Activated B cell treated with CpG ODN at 0.5 μM for 24 hours (primary cell): ENCODE measurements at regions of chr2 and their contacts with region 1.

Region 1: GRCh38 chr2:219160186-219161017 is at the start of gene NHEJ1:
- DNase-seq: peak; percentile 96
- ATAC-seq: peak; percentile 87
- H3K4me3 Mint-ChIP-seq: peak within 1 kb of the TSS; percentile 96
- H3K27ac Mint-ChIP-seq: peak within 1 kb of the TSS; percentile 98
- H3K4me1 Mint-ChIP-seq: peaks cover 16% of the 10 kb centered on the region
- H3K27me3 Mint-ChIP-seq: no peaks in the 10 kb centered on the region
- CTCF ChIP-seq: peak; percentile 42
- total RNA-seq, gene NHEJ1: 19.1 and 25.0 TPM in 2 replicates

Region 2: DNA sequence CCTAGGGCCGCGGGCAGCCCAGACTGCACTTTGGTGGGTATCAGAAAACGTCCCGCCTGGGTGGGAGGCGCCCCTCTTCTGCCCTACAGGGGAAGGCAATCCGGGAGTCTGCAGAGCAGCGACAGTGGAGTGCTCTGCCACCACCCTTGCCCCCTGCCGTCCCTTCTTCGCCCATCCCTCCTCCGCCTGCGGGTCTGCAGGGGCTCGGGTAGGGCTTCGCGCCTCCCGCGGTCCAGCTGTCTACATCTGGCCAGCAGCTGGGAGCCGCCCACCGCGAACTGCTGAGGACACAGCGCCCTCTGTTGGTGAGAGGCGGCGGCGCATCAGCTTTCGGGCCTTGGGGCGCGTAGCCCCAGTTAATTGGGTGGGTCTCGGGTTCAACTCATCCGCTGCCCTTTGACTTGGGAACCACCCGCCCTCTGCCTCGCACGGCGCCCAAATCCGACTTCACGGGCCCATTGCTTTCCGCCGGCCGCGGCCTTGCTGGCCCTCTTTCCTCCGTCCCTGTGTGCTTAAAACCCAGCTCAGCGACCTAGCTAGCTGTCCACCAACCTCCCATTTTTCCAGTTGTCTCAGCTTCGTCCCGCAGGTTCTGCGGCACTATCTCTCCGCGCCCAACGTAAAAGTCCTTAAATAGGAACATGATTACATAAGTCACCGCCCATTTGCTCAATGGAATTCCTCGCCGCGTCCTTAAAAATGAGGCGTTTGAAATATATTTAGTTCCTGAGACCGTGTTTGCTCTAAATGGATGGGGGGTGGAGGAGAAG is 262.1 kb before region 1 on chr2:
- CTCF ChIA-PET with region 1: interaction called, 5 read pairs
- POLR2A ChIA-PET with region 1: no interaction called
- intact Hi-C with region 1: loop called (anchors 5 kb)
- DNase-seq: peak; percentile 88
- ATAC-seq: peak; percentile 22
- H3K4me3 Mint-ChIP-seq: peak overlapping the region; percentile 85
- H3K27ac Mint-ChIP-seq: peak overlapping the region; percentile 84
- H3K4me1 Mint-ChIP-seq: peaks cover 47% of the 10 kb centered on the region
- H3K27me3 Mint-ChIP-seq: peaks cover 22% of the 10 kb centered on the region
- CTCF ChIP-seq: peak; percentile 97

Region 3: DNA sequence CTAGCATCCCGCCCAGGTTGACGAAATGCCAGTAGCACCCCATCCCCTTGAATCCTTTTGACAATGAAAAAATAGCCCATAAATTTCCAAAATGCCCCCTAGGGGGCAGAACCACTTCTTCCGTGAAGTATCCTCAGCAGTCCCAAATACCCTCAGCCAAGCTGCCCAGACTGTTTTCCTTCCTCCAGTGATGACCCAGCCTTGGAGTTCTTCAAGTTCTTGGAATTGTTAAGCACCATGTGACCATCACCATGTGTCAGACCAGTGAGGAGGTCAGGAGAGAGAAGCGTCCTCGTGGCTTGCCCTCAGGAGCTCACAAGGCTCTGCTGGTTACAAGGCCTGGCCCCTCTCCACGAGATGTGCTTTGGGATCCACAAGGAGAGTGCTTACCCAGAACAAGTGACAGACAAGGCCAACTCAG is 10.8 kb after region 1 on chr2:
- CTCF ChIA-PET with region 1: interaction called, 16 read pairs
- POLR2A ChIA-PET with region 1: interaction called, 4 read pairs
- intact Hi-C with region 1: loop called (anchors 1 kb)
- DNase-seq: no peak
- ATAC-seq: peak; percentile 40
- H3K4me3 Mint-ChIP-seq: no peak overlapping the region
- H3K27ac Mint-ChIP-seq: no peak overlapping the region
- H3K4me1 Mint-ChIP-seq: peaks cover 21% of the 10 kb centered on the region
- H3K27me3 Mint-ChIP-seq: no peaks in the 10 kb centered on the region
- CTCF ChIP-seq: no peak

Region 4: DNA sequence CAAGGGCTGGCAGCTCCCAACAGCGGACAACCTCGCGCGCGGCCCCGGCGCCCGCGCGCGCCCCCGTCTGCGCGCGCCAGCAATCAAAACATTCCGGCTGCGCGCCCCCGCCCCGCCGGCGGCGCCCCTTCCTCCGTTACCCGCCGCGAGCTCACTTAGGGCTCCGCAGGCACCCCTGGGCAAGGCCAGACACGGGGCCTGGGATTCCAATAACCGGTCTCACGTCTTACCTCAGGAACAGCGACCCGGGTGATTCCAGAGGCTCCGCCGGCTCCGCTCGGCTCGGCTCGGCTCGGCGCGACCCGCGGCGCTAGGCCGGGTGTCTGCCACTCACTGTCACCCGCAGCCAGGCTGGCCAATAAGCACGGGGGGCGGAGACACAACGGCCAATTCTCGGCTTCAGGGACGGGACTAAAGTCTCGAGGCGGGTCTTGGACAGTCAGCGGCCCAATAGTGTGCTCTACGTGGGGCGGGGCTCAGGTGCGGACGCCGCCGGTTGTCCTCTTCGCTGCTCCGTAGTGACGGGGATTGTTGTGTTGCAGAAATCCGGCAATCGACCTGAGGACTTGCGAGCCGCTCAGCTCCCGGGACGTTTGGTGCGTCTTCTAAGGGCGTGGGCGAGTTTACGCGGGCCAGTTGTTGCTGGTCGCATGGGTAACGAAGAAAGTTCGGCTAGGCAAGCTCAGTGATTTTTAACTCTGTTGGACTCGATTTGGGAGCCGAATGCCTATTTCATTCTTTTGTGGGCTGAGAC is 69.1 kb after region 1 on chr2 and contains the starts of genes ANKZF1 and ATG9A:
- CTCF ChIA-PET with region 1: no interaction called
- POLR2A ChIA-PET with region 1: no interaction called
- intact Hi-C with region 1: loop called (anchors 1 kb)
- DNase-seq: peak; percentile 90
- ATAC-seq: peak; percentile 97
- H3K4me3 Mint-ChIP-seq: peak within 1 kb of the TSS; percentile 96
- H3K27ac Mint-ChIP-seq: peak within 1 kb of the TSS; percentile 95
- H3K4me1 Mint-ChIP-seq: peaks cover 43% of the 10 kb centered on the region
- H3K27me3 Mint-ChIP-seq: no peaks in the 10 kb centered on the region
- CTCF ChIP-seq: no peak
- total RNA-seq, gene ANKZF1: 96.0 and 105 TPM in 2 replicates
- total RNA-seq, gene ATG9A: 28.3 and 38.3 TPM in 2 replicates

Region 5: GRCh38 chr2:219278655-219279516 is 118.5 kb after region 1 on chr2 and contains the start of gene DNAJB2:
- CTCF ChIA-PET with region 1: no interaction called
- POLR2A ChIA-PET with region 1: no interaction called
- intact Hi-C with region 1: loop called (anchors 1 kb)
- DNase-seq: peak; percentile 99
- ATAC-seq: peak; percentile 78
- H3K4me3 Mint-ChIP-seq: peak within 1 kb of the TSS; percentile 89
- H3K27ac Mint-ChIP-seq: peak within 1 kb of the TSS; percentile 97
- H3K4me1 Mint-ChIP-seq: peaks cover 49% of the 10 kb centered on the region
- H3K27me3 Mint-ChIP-seq: no peaks in the 10 kb centered on the region
- CTCF ChIP-seq: no peak
- total RNA-seq, gene DNAJB2: 59.0 and 71.1 TPM in 2 replicates

Region 6: DNA sequence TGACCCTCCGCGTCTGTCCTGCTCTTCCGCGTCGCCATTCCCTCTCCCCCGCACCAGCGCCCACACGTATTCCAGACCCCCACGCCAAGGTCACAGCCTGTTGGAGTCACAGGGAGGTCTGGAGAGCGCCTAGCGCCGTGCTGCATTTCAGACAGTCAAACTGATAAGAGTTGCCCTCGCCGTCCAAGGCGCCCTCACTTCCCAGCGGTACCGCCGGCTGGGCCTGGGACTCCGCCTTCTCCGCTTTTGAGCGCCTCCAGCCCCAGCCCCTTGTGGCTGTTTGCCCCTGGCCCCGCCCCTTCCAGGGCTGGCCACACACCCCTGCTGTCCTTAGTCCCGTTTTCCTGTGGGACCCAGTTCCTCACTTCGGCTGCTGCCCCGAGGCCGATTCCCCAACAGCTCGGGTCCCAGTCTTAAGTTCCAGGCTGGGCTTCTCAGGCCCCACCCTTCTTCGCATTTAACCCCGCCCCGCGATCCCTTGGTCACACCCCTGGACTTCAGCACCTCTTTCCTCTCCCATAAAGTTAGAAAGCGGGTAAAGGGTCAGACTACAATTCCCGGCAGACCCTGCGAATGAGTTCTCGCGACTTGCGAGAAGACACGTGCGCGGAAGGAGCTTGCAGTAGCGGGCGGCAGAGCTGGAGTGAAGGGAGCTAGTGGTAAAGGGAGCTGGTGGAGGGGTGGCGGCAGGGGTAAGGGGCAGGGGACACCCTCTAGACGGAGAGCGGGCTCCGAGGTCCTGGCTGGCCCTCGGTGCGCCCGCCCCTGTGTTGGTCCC is 338.1 kb after region 1 on chr2 and contains the start of gene GMPPA:
- CTCF ChIA-PET with region 1: no interaction called
- POLR2A ChIA-PET with region 1: no interaction called
- intact Hi-C with region 1: loop called (anchors 1 kb)
- DNase-seq: peak; percentile 86
- ATAC-seq: peak; percentile 94
- H3K4me3 Mint-ChIP-seq: peak within 1 kb of the TSS; percentile 98
- H3K27ac Mint-ChIP-seq: peak within 1 kb of the TSS; percentile 86
- H3K4me1 Mint-ChIP-seq: peaks cover 34% of the 10 kb centered on the region
- H3K27me3 Mint-ChIP-seq: peaks cover 28% of the 10 kb centered on the region
- CTCF ChIP-seq: no peak
- total RNA-seq, gene GMPPA: 32.9 and 33.0 TPM in 2 replicates